ENCODE measurements at regions of chr6 and their contacts with region 1.

Region 1: DNA sequence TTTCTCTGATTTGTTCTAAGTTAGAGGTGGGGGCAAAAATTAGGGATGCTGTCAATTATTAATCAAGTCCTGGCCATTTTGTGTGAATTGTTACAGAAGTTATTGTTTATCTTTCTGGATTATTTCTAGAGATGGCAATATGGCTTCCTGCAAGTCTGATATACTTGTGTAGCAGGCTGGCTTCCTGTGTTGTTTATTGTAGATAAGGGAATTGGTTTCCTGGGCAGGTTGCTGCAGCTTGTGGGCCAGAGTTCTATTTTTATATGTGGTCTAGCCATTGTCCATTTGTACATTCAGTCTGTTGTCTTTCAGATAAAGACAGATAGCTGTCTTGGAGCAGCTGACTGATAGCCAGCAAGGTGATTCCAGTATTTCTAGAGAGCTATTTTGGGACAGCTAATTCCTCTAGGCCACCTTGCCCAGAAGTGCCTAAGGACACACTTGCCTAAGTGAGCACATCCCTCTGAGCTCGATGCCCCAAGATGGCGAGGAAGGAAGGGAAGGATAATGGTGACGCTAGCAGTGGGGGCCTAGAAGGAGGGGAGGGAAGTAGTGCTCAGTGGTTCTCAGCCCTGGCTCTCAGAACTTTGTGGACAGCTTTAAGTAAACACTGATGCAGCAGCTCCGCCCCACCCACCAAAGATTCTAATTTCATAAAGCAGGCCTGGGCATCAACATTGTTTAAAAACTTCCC is 25.5 kb downstream of the DDO start:
- DNase-seq: no peak
- ATAC-seq: peak in 3 of 8 donors; percentile 32 to 63 (median 40)
- H3K4me3 ChIP-seq: no peak overlapping the region
- H3K27ac ChIP-seq: peak overlapping the region in 1 of 10 donors; percentile 3
- H3K4me1 ChIP-seq: peaks cover 0 to 18% (median 7%) of the 10 kb centered on the region in 9 donors
- H3K27me3 ChIP-seq: no peaks in the 10 kb centered on the region
- CTCF ChIP-seq: no peak

Region 2: GRCh38 chr6:110039364-110039980 is 350.4 kb before region 1 on chr6:
- intact Hi-C with region 1: loop called in 3 of 10 experiments (anchors 5 to 10 kb)
- DNase-seq: peak; percentile 82 to 83
- ATAC-seq: peak; percentile 84 to 95 (median 92)
- H3K4me3 ChIP-seq: peak overlapping the region in 7 of 10 donors; percentile 4 to 48 (median 28)
- H3K27ac ChIP-seq: peak overlapping the region in 1 of 10 donors; percentile 76
- H3K4me1 ChIP-seq: peaks cover 0 to 15% (median 5%) of the 10 kb centered on the region in 9 donors
- H3K27me3 ChIP-seq: peaks cover 0 to 4% (median 0%) of the 10 kb centered on the region in 7 donors
- CTCF ChIP-seq: peak; percentile 73 to 96 (median 90)

Region 3: DNA sequence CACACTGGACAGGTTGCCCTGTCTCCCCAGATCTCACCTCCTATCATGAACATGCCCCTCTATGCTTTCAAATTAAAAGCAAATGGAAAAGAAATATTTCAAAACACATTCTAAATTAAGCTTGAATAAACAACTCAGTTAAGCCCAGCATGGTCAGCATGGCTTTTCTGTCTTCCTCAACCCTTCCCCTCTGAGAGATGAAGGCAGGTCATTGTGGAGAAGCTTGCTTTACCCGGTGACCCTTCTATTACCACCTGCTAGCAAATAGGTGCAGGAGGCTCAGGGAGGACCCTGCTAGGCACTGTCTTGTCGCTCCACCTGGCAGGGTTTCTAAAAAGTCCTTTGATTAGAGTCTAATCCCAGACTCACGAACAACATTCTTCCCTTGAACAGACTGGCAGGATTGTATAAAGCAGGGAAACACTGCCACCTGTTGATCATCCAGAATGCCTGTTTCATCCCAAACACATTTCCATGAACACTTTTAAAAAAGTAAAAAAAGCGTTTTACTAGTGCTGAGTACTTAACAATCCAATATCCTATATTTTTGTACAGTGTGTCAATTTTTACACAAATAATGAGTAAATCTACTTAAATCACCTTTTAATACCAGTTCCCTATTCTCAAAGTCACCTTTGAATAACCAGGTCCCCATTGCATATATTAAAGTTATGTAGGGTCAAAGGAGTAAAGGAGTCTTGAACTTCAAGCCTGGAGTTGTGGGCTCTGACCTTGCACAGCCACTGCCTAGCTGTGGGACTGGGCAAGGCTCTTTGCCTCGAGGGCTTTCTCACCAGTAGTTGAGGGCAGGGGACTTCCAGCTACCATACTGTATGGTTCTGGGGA is 336.2 kb before region 1 on chr6:
- intact Hi-C with region 1: loop called in 8 of 10 experiments (anchors 5 to 10 kb)
- DNase-seq: peak in 1 of 2 donors; percentile 25
- ATAC-seq: peak in 6 of 8 donors; percentile 34 to 62 (median 58)
- H3K4me3 ChIP-seq: no peak overlapping the region
- H3K27ac ChIP-seq: no peak overlapping the region
- H3K4me1 ChIP-seq: no peaks in the 10 kb centered on the region
- H3K27me3 ChIP-seq: peaks cover 0 to 16% (median 0%) of the 10 kb centered on the region in 7 donors
- CTCF ChIP-seq: peak; percentile 34 to 81 (median 74)

Region 4: GRCh38 chr6:110179401-110180227 is 210.2 kb before region 1 on chr6 and contains the start of gene WASF1:
- intact Hi-C with region 1: loop called in 9 of 10 experiments (anchors 1 to 10 kb)
- DNase-seq: peak; percentile 92
- ATAC-seq: peak; percentile 99 to 100 (median 99)
- H3K4me3 ChIP-seq: peak within 1 kb of the TSS; percentile 73 to 98 (median 83)
- H3K27ac ChIP-seq: peak within 1 kb of the TSS; percentile 4 to 96 (median 84)
- H3K4me1 ChIP-seq: peaks cover 11 to 47% (median 35%) of the 10 kb centered on the region in 9 donors
- H3K27me3 ChIP-seq: peaks cover 0 to 5% (median 0%) of the 10 kb centered on the region in 7 donors
- CTCF ChIP-seq: peak in 1 of 9 donors; percentile 7
- total RNA-seq, gene WASF1: 0.43 to 3.1 (median 0.79) TPM

Region 5: GRCh38 chr6:110307368-110307767 is 82.5 kb before region 1 on chr6:
- intact Hi-C with region 1: no loop called
- DNase-seq: no peak
- ATAC-seq: no peak
- H3K4me3 ChIP-seq: no peak overlapping the region
- H3K27ac ChIP-seq: no peak overlapping the region
- H3K4me1 ChIP-seq: no peaks in the 10 kb centered on the region
- H3K27me3 ChIP-seq: peaks cover 0 to 6% (median 0%) of the 10 kb centered on the region in 7 donors
- CTCF ChIP-seq: no peak

Region 6: GRCh38 chr6:110430236-110430635 is 40.4 kb after region 1 on chr6:
- intact Hi-C with region 1: no loop called
- DNase-seq: no peak
- ATAC-seq: no peak
- H3K4me3 ChIP-seq: no peak overlapping the region
- H3K27ac ChIP-seq: no peak overlapping the region
- H3K4me1 ChIP-seq: peaks cover 0 to 13% (median 0%) of the 10 kb centered on the region in 9 donors
- H3K27me3 ChIP-seq: peaks cover 0 to 37% (median 0%) of the 10 kb centered on the region in 7 donors
- CTCF ChIP-seq: no peak